ENCODE measurements at regions of chr2 and their contacts with region 1.

Region 1: DNA sequence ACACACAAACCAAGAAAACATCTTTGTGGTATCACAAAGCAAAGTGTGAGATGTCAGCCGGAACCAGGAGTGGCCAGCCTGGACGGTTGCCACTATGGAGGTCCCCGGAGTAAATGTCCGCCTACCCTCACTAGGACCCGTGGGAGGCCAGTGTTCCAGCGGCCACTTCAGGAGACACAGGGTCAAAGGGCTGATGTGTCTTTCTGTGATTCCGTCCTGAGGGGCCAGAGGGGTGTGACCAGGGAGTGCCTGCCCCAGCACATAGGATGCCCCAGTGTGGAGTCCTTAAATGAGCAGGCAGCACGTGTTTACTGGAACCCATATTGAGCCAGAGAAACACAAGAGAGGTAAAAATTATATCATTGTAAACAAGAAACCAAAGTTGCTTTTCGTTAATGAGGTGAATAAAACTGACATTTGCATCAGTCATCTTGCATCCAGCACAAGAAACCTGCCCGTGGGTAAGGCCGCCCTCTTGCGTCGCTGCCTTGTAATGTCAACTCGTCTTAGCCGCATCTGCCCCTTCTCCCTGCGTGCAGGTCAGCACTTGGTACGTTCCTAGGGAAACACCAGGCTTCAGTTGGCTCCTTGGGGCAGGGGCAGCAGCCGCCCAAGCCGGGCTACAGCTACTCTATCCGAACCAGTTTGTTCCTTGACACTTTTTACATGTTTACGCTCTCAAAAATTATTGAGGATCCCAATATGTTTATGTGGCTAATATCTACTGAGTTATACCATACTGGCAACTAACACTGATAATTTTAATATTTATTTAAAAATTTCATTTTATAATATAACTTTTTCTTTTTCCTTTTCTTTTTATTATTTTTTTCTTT is 46.7 kb upstream of the LAPTM4A start:
- DNase-seq: peak; percentile 87
- ATAC-seq: peak; percentile 75
- H3K4me3 ChIP-seq: no peak overlapping the region
- H3K27ac ChIP-seq: no peak overlapping the region
- H3K4me1 ChIP-seq: peaks cover 22% of the 10 kb centered on the region
- H3K27me3 ChIP-seq: no peaks in the 10 kb centered on the region
- CTCF ChIP-seq: peak; percentile 94

Region 2: DNA sequence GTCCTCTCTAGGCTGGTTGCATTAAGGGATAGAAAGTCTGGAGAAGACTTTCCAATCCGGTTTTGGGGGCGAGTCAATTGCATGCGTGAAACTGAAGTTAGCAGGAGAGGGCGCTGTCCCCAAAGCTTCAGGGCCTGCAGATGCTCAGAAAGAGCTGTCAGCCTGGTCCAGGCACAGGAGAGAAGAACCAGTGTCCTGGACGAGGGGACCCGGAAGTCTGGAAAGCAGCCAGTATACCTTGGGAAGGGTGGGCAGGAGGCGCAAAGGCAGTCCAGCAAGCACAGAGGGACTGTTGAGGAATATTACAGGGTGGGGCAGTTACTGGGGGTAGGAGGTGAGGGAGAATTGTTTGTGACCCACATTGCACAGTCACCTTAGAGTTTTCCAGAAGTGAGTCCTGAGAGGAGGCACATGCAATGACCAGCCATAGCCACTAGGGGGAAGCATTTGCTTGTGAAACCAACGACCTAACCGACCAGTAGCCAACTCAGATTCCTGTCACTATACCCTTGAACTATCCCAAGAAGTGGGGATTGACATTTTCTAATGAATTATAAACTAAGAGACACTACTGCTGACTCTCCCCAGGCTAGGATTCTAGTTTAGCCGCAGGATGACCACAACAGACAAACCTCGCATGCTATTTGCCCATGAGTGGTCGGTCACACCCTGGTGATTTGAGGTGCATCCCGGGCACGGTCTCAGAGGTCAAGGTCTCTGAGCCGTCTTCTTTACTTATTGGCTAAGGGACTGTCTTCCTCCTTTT is 1710.5 kb before region 1 on chr2:
- CTCF ChIA-PET with region 1: no interaction called
- POLR2A ChIA-PET with region 1: no interaction called
- intact Hi-C with region 1: loop called (anchors 5 kb)
- DNase-seq: peak; percentile 88
- ATAC-seq: peak; percentile 94
- H3K4me3 ChIP-seq: no peak overlapping the region
- H3K27ac ChIP-seq: no peak overlapping the region
- H3K4me1 ChIP-seq: no peaks in the 10 kb centered on the region
- H3K27me3 ChIP-seq: no peaks in the 10 kb centered on the region
- CTCF ChIP-seq: peak; percentile 95

Region 3: DNA sequence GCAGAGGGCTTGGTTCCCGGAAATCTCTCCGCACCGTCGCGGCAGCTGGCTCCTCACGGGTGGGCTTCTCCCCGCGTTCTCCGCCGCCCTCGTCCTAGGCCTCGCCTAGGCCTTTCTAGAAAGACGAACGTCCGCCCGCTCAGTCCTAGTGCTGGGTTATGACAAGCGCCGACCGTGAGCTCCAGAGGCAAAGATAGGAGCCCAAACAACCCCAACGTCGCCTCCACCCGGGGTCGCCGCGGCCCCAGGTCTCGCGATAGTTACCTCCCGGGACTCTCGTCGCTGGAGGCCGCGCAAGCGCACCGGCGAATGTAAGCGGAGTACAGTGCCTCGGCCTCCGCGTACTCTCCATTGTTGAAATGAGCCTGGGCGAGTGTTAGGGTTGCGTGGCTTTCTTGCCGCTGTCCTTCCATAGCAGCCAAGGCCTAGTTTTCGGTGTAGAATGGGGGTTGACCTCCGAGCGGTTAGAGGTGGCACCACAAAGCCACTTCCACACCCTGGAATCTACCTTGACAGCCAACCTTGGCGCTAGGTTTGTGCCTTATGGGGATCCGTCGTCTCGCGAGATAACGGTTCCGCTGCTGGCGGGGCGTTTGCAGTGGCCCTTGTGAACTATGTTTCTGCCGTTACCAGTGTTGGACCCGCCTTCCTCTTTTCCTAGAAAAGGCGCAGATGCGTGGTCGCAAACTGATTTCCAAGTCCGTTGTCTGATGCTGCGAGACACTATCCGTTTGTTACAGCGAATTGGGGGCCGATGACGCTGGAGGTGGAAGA is 196.5 kb before region 1 on chr2 and contains the start of gene TTC32:
- CTCF ChIA-PET with region 1: no interaction called
- POLR2A ChIA-PET with region 1: no interaction called
- intact Hi-C with region 1: loop called (anchors 5 kb)
- DNase-seq: peak; percentile 92
- ATAC-seq: peak; percentile 81
- H3K4me3 ChIP-seq: peak within 1 kb of the TSS; percentile 85
- H3K27ac ChIP-seq: peak within 1 kb of the TSS; percentile 89
- H3K4me1 ChIP-seq: peaks cover 30% of the 10 kb centered on the region
- H3K27me3 ChIP-seq: no peaks in the 10 kb centered on the region
- CTCF ChIP-seq: no peak
- total RNA-seq, gene TTC32: 10.0 and 12.1 TPM in 2 replicates

Region 4: DNA sequence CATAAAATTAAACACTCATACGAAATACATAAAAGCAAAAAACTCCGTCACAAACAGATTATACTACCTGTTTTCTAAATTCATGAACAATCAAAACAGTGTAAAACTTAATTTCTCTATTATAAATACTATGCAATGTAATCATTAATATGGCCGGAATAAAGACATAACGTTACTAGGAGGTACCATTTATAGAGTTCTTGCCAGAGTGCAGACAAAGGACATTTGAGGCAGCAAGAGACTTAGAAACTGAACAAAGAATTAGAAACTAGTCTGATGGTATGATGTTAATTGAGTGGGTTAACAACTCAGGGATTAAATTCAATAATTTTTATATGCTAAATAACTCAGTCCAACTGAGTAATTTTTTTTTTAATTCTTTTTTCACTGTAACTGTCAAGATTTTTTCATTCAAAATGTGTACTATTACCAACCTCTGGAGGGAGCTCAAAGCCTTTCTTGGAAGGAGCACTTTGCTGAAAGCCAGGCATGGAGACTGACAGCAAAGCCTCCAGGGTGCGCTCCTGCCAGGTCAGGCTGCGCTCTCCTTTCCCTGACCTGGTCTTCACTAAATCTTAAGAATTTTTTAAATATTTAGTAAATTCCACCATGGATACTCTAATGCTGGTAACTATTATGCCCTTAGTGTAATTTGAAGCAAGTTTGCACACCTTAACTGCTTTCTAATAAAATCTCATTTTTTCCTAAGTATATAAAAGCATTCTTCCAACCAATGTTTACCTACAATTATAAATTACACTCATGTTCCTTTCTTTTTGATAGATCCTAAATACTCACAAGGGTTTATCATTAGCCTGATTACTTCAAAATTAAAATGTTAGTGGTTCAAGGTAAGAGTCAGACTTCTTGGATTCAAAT is 142.3 kb before region 1 on chr2:
- CTCF ChIA-PET with region 1: interaction called, 5 read pairs
- POLR2A ChIA-PET with region 1: interaction called, 8 read pairs
- intact Hi-C with region 1: loop called (anchors 1 kb)
- DNase-seq: peak; percentile 80
- ATAC-seq: peak; percentile 98
- H3K4me3 ChIP-seq: no peak overlapping the region
- H3K27ac ChIP-seq: no peak overlapping the region
- H3K4me1 ChIP-seq: no peaks in the 10 kb centered on the region
- H3K27me3 ChIP-seq: no peaks in the 10 kb centered on the region
- CTCF ChIP-seq: peak; percentile 95

Region 5: DNA sequence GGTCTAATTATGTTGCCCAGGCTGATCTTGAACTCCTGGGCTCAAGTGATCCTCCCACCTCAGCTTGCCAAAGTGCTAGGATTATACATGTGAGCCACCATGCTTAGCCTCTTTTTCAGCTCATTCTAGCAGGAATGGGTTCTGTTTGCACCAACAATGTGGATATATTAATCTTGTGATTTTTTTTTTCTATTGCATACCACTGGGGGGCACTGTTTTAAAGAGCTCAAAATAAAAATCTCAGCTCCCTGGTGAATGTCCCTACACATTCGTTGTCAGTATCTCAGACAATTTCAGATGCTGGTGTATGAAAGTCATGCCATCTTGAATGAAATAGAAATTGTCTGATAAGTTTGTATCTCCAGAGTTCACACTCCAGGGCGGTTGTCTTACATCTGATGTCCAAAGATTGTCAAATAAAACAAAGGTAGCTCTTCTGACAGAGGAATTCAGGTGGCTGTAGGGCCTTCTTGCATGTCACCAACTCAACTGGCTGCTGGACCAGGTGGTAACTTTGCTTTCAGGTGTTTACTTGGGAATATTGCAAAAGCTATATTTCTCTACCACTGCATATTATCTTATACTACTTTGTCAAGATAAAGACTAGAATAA is 82.5 kb before region 1 on chr2:
- CTCF ChIA-PET with region 1: interaction called, 11 read pairs
- POLR2A ChIA-PET with region 1: no interaction called
- intact Hi-C with region 1: loop called (anchors 1 kb)
- DNase-seq: peak; percentile 60
- ATAC-seq: no peak
- H3K4me3 ChIP-seq: no peak overlapping the region
- H3K27ac ChIP-seq: no peak overlapping the region
- H3K4me1 ChIP-seq: peaks cover 10% of the 10 kb centered on the region
- H3K27me3 ChIP-seq: no peaks in the 10 kb centered on the region
- CTCF ChIP-seq: peak; percentile 74

Region 6: GRCh38 chr2:20051532-20052228 is 46.4 kb before region 1 on chr2 and contains the start of gene LAPTM4A:
- CTCF ChIA-PET with region 1: no interaction called
- POLR2A ChIA-PET with region 1: interaction called, 6 read pairs
- intact Hi-C with region 1: loop called (anchors 1 kb)
- DNase-seq: peak; percentile 99
- ATAC-seq: peak; percentile 92
- H3K4me3 ChIP-seq: peak within 1 kb of the TSS; percentile 79
- H3K27ac ChIP-seq: peak within 1 kb of the TSS; percentile 91
- H3K4me1 ChIP-seq: peaks cover 33% of the 10 kb centered on the region
- H3K27me3 ChIP-seq: no peaks in the 10 kb centered on the region
- CTCF ChIP-seq: no peak
- total RNA-seq, gene LAPTM4A: 54.5 and 62.7 TPM in 2 replicates

Measured in PC-3 (cell line).